ENCODE measurements at regions of chr12 and their contacts with region 1.

Region 1: GRCh38 chr12:93019975-93020630 is 91.0 kb upstream of the EEA1 start:
- H3K4me3 ChIP-seq: no peak overlapping the region
- H3K27ac ChIP-seq: no peak overlapping the region
- H3K4me1 ChIP-seq: peaks cover 6% of the 10 kb centered on the region
- CTCF ChIP-seq: no peak

Region 2: DNA sequence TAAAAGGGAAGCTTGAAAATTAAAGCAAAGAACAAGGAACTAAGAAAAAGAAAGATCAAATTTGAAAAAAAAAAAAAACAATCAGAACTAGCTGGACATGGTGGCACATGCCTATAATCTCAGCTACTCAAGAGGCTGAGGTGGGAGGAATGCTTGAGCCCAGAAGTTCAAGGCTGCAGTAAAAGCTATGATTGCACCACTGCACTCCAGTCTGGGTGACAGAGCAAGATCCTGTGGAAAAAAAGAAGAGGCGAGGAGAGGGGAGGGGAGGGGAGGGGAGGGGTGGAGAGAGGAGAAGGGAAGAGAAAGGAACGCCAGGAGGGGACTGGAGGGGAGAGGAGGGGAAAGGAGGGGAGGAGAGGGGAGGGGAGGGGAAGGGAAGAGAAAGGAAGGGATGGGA is 134.0 kb before region 1 on chr12:
- CTCF ChIA-PET with region 1: no interaction called
- POLR2A ChIA-PET with region 1: no interaction called
- H3K4me3 ChIP-seq: no peak overlapping the region
- H3K27ac ChIP-seq: no peak overlapping the region
- H3K4me1 ChIP-seq: no peaks in the 10 kb centered on the region
- CTCF ChIP-seq: no peak

Region 3: GRCh38 chr12:93042283-93042682 is 22.2 kb after region 1 on chr12:
- CTCF ChIA-PET with region 1: interaction called, 3 read pairs
- POLR2A ChIA-PET with region 1: interaction called, 14 read pairs
- H3K4me3 ChIP-seq: no peak overlapping the region
- H3K27ac ChIP-seq: no peak overlapping the region
- H3K4me1 ChIP-seq: peaks cover 6% of the 10 kb centered on the region
- CTCF ChIP-seq: no peak